ENCODE measurements at regions of chr2 and their contacts with region 1.

Region 1: DNA sequence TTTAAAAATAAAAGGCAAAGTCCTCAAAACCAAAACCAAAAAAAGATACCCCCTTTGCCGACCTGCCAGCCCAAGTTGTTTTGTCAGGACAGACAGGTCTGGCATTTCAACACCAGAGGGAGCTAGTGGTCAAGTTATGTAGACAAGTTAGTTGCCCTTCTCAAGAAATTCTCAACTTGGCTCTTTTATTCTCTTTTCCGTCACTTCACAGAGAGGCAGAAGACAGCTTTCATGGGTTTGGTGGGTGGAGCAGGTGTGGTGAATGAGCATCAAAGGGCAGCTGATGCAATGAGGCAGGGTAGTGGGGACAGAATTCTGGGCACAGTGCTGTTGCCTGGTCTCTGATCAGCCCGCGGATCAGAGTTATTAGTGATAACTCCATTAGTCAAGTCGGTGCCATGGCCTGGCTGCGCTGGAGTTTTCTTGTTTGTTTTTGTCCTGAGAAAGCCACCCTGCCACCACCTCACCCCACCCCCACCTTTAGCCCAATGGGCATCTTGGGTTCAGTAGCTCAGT is 303.7 kb upstream of the EPAS1 start:
- DNase-seq: peak; percentile 59 to 74
- H3K4me3 ChIP-seq: no peak overlapping the region
- H3K27ac ChIP-seq: peak overlapping the region; percentile 88
- H3K4me1 ChIP-seq: peaks cover 36% of the 10 kb centered on the region
- H3K27me3 ChIP-seq: no peaks in the 10 kb centered on the region
- CTCF ChIP-seq: peak; percentile 95

Region 2: DNA sequence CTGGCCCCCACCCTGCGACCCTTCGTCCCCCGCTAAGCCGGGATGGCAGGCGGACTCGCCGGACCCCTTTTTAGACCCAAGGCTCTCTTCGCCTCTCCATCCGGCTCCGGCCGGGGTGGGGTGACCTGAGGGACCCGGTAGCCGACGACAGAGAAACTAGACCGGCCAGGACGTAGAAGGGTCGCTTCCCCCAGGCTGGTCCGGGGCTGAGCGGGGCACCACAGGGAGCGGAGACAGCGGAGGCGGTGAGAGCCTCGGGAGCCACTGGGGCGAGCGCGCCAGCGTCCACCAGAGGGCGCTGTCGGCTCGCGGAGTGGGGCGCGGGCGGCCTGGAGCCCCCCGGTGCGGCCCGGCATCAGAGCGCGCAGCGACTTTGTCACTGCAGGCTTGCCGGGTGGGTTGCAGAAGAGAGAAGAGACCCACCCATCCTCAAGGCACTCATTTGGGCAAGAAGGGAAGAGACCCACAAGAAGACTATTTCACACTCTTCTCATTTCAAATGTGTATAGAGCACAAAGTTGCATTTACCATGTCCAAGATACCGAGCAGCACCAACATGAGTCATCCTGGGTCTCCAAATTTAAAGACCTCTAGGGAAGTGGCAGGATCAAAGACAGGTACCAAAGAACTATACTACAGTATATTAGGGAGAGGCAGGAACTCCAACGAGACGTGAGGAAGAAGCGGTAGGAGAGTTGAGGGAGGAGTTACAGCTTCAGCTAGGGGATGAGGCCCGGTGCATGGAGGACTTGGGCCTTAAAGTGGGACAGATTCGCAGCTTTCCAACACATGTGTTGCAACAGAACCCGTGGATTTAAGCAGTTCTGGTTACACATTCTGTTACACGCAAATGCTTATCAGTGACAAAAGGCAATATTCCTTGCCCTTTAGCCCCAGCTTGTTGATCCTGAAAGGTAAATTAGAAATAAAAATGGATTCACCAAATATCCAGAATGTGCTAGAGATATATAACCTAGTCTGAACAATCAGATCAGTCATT is 349.7 kb before region 1 on chr2:
- CTCF ChIA-PET with region 1: no interaction called
- POLR2A ChIA-PET with region 1: no interaction called
- intact Hi-C with region 1: loop called (anchors 2 kb)
- DNase-seq: peak in 1 of 2 experiments; percentile 72
- H3K4me3 ChIP-seq: peak overlapping the region; percentile 61
- H3K27ac ChIP-seq: no peak overlapping the region
- H3K4me1 ChIP-seq: peaks cover 9% of the 10 kb centered on the region; the same call in 1 of the 2 replicates
- H3K27me3 ChIP-seq: no peaks in the 10 kb centered on the region
- CTCF ChIP-seq: peak; percentile 99

Region 3: DNA sequence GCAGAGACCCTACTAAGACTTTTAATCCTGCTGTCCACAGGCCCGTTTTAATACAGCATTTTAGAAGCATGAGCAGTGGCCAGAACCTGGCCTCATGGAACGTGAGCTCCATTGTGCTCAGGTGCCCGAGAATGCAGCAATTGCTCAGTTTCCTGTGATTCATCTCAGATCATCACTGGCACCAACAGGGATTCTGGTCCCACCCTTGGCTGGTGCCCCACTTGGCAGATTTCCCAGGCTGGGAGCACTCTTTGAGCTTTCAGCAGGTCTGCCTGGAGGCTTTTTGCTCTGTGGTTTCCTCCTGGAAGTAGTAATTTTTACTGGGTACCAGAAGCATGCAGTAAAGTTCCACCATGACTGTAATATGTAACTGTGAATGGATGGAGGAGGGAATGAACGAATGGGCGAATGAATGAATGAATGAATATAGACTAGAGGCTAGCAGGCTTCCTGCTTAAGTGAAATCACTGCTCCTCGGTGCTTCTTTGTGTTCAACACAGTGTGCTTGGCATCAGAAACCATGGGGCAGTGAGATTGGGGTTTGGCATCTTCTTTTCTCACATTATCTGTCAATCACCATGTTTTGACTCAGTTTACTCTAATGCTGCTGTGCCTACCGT is 29.2 kb before region 1 on chr2:
- CTCF ChIA-PET with region 1: no interaction called
- POLR2A ChIA-PET with region 1: no interaction called
- intact Hi-C with region 1: loop called (anchors 1 kb)
- DNase-seq: peak; percentile 99 to 100
- H3K4me3 ChIP-seq: no peak overlapping the region
- H3K27ac ChIP-seq: peak overlapping the region; percentile 84
- H3K4me1 ChIP-seq: peaks cover 58% of the 10 kb centered on the region
- H3K27me3 ChIP-seq: no peaks in the 10 kb centered on the region
- CTCF ChIP-seq: no peak

Region 4: DNA sequence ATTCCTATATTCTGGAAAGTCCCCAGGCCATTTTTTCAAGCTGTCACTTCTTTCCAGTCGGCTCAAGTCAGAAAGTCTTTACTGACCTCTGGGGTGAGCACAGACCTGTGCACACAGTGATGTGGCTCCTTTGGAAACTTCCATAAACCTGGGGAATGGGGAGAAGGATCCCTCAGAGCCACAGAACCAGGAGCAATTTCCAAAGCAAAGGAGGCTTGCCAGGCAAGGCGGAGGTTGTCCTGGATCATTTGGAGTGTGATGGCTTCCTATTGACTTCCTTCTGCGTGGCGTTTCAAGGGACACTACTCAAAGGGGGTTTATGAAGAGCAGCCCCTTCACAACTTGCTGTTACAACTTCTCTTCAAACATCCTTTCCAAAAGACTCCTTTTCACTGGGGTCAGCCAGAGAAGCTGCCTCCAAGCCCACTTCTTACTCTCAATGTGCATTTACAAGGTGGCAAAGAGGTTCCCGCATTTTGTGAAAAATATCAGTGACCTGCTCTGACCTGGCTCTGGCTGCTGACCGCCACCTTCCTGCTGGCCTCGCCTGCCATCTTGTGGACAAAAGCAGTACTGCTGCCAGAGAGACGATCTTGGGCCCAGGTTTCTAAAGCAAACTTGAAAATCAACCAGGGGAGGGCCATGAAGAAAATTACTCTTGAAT is 467.6 kb after region 1 on chr2:
- CTCF ChIA-PET with region 1: interaction called, 10 read pairs
- POLR2A ChIA-PET with region 1: no interaction called
- intact Hi-C with region 1: loop called (anchors 1 kb)
- DNase-seq: peak; percentile 65 to 86
- H3K4me3 ChIP-seq: no peak overlapping the region
- H3K27ac ChIP-seq: no peak overlapping the region
- H3K4me1 ChIP-seq: peaks cover 7% of the 10 kb centered on the region
- H3K27me3 ChIP-seq: no peaks in the 10 kb centered on the region
- CTCF ChIP-seq: peak; percentile 100

Region 5: GRCh38 chr2:46887028-46887885 is 893.7 kb after region 1 on chr2:
- CTCF ChIA-PET with region 1: no interaction called
- POLR2A ChIA-PET with region 1: no interaction called
- intact Hi-C with region 1: loop called (anchors 5 kb)
- DNase-seq: peak; percentile 30 to 49
- H3K4me3 ChIP-seq: no peak overlapping the region
- H3K27ac ChIP-seq: no peak overlapping the region
- H3K4me1 ChIP-seq: peaks cover 13% of the 10 kb centered on the region
- H3K27me3 ChIP-seq: no peaks in the 10 kb centered on the region
- CTCF ChIP-seq: no peak